CD4-positive, alpha-beta memory T cell (primary cell): ENCODE measurements at regions of chr4 and their contacts with region 1.

Region 1: DNA sequence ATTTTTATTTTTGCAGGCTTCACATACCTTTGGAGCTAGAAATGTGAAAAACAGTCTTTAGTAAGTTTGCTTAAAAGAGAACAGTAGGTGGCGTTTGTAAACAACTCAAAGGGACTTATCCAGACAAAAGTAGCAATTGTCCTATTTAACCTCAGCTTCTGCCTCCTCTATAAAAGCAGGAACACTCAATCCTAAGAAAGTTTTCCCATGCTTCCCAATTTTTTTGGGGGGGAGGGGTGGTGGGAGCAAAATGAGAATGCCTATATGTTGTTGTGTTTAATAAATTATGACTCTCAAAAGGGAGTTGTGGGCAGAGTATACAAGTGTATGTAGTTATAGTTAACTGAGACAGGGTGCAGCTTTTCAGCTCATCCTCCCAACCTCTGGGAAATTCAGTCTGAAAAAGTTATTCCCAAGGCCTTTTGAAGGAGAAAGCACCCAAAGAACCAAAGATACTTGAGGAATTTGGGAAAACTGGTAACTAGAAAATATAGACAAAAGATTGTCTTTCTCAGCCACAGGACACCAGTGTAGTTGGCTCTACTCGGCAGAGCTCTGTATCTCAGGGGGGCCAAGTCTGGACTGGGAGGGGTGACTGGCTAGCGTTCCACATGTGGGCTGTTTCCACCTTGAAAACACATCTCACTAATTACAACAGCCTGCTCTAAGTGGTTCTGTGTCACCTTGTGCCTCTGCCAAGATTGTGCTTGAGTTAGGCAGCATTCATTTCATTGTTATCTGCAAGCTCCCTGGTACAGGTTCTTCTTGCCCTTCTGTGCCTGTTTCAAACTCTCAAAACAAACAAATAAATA is 2.8 kb downstream of the SFRP2 start:
- DNase-seq: peak in 1 of 5 donors; percentile 21
- H3K4me3 ChIP-seq: no peak overlapping the region
- H3K4me3 Mint-ChIP-seq: no peak overlapping the region
- H3K27ac ChIP-seq: no peak overlapping the region
- H3K27ac Mint-ChIP-seq: no peak overlapping the region
- H3K4me1 ChIP-seq: peaks cover 20% of the 10 kb centered on the region
- H3K4me1 Mint-ChIP-seq: peaks cover 7 to 28% (median 19%) of the 10 kb centered on the region in 4 donors
- H3K27me3 ChIP-seq: peaks cover 21% of the 10 kb centered on the region
- H3K27me3 Mint-ChIP-seq: peaks cover 50 to 67% of the 10 kb centered on the region in 2 donors

Region 2: GRCh38 chr4:154018659-154019058 is 232.5 kb after region 1 on chr4:
- CTCF ChIA-PET with region 1: interaction called, 6 read pairs
- POLR2A ChIA-PET with region 1: no interaction called
- intact Hi-C with region 1: loop called (anchors 5 kb)
- DNase-seq: peak in 1 of 5 donors; percentile 3
- H3K4me3 ChIP-seq: no peak overlapping the region
- H3K4me3 Mint-ChIP-seq: no peak overlapping the region
- H3K27ac ChIP-seq: no peak overlapping the region
- H3K27ac Mint-ChIP-seq: no peak overlapping the region
- H3K4me1 ChIP-seq: no peaks in the 10 kb centered on the region
- H3K4me1 Mint-ChIP-seq: no peaks in the 10 kb centered on the region
- H3K27me3 ChIP-seq: no peaks in the 10 kb centered on the region
- H3K27me3 Mint-ChIP-seq: peaks cover 4 to 8% of the 10 kb centered on the region in 2 donors

Region 3: GRCh38 chr4:154506253-154506652 is 720.1 kb after region 1 on chr4:
- CTCF ChIA-PET with region 1: interaction called, 4 read pairs
- POLR2A ChIA-PET with region 1: no interaction called
- intact Hi-C with region 1: loop called (anchors 5 kb)
- DNase-seq: no peak
- H3K4me3 ChIP-seq: no peak overlapping the region
- H3K4me3 Mint-ChIP-seq: no peak overlapping the region
- H3K27ac ChIP-seq: no peak overlapping the region
- H3K27ac Mint-ChIP-seq: no peak overlapping the region
- H3K4me1 ChIP-seq: no peaks in the 10 kb centered on the region
- H3K4me1 Mint-ChIP-seq: no peaks in the 10 kb centered on the region
- H3K27me3 ChIP-seq: peaks cover 6% of the 10 kb centered on the region
- H3K27me3 Mint-ChIP-seq: peaks cover 19 to 28% of the 10 kb centered on the region in 2 donors

Region 4: GRCh38 chr4:154618708-154619315 is 832.7 kb after region 1 on chr4:
- CTCF ChIA-PET with region 1: no interaction called
- POLR2A ChIA-PET with region 1: no interaction called
- intact Hi-C with region 1: loop called (anchors 5 kb)
- DNase-seq: peak in 4 of 5 donors; percentile 18 to 33 (median 27)
- H3K4me3 ChIP-seq: no peak overlapping the region
- H3K4me3 Mint-ChIP-seq: no peak overlapping the region
- H3K27ac ChIP-seq: no peak overlapping the region
- H3K27ac Mint-ChIP-seq: no peak overlapping the region
- H3K4me1 ChIP-seq: no peaks in the 10 kb centered on the region
- H3K4me1 Mint-ChIP-seq: peaks cover 0 to 3% (median under 1%) of the 10 kb centered on the region in 4 donors
- H3K27me3 ChIP-seq: no peaks in the 10 kb centered on the region
- H3K27me3 Mint-ChIP-seq: peaks cover 2 to 7% of the 10 kb centered on the region in 2 donors